ENCODE measurements at regions of chr20 and their contacts with region 1.

Region 1: GRCh38 chr20:62793912-62794724 is 2.2 kb upstream of the MRGBP start:
- DNase-seq: peak; percentile 99
- ATAC-seq: peak; percentile 83
- H3K4me3 Mint-ChIP-seq: peak overlapping the region; percentile 82
- H3K27ac Mint-ChIP-seq: peak overlapping the region; percentile 92
- H3K4me1 Mint-ChIP-seq: peaks cover 44% of the 10 kb centered on the region
- H3K27me3 Mint-ChIP-seq: no peaks in the 10 kb centered on the region
- CTCF ChIP-seq: no peak

Region 2: GRCh38 chr20:62386383-62387218 is 407.5 kb before region 1 on chr20 and contains the start of gene RPS21:
- CTCF ChIA-PET with region 1: no interaction called
- POLR2A ChIA-PET with region 1: interaction called, 16 read pairs
- intact Hi-C with region 1: loop called (anchors 1 kb)
- DNase-seq: peak; percentile 91
- ATAC-seq: peak; percentile 87
- H3K4me3 Mint-ChIP-seq: peak within 1 kb of the TSS; percentile 89
- H3K27ac Mint-ChIP-seq: peak within 1 kb of the TSS; percentile 80
- H3K4me1 Mint-ChIP-seq: peaks cover 48% of the 10 kb centered on the region
- H3K27me3 Mint-ChIP-seq: no peaks in the 10 kb centered on the region
- CTCF ChIP-seq: no peak
- total RNA-seq, gene RPS21: 2,912 and 3,555 TPM in 2 replicates

Region 3: DNA sequence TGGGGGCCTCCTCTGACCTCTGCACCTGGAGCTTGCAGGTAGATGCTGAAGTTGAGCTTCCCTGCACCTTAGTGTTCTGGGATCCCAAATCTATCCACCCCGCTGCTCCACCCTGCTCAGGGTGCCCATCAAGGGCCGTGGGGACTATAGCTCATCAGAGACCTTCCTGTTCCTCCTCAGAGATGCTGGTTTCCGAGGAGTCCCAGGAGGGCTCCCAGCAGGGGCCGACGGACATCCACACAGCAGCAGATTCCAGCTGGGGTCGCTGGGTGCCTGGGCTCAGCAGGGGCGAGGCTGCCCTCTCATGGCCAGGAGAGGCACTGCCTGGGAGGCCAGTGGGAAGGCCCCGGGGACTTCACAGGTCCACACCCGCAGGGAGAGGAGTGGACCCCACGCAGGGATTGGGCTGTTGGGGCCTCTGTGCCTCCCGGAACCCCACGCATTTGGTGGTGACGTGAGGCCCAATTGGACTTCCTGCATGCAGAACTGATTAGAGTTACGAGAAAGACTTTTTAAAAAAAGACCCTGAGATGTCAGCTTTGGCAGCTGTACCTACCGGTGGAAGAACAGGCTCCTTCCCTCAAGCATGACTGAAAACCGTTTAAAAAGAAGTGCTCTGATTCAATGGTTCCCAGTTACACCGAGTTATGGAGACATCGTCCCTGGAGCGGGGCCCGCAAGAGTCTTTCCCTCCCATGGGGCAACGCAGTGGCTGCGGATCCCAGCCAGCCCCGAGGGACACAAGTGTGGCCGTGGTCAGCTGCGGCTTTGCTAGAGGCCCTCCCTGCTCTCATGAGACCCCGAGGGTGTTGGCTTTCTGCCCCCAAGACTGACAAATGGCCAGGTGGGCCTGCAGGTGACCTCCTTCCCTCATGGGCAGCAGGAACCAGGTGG is 177.1 kb before region 1 on chr20:
- CTCF ChIA-PET with region 1: interaction called, 13 read pairs
- POLR2A ChIA-PET with region 1: interaction called, 48 read pairs
- intact Hi-C with region 1: loop called (anchors 1 kb)
- DNase-seq: peak; percentile 73
- ATAC-seq: peak; percentile 61
- H3K4me3 Mint-ChIP-seq: peak overlapping the region; percentile 73
- H3K27ac Mint-ChIP-seq: peak overlapping the region; percentile 93
- H3K4me1 Mint-ChIP-seq: peaks cover 45% of the 10 kb centered on the region
- H3K27me3 Mint-ChIP-seq: no peaks in the 10 kb centered on the region
- CTCF ChIP-seq: peak; percentile 84

Region 4: DNA sequence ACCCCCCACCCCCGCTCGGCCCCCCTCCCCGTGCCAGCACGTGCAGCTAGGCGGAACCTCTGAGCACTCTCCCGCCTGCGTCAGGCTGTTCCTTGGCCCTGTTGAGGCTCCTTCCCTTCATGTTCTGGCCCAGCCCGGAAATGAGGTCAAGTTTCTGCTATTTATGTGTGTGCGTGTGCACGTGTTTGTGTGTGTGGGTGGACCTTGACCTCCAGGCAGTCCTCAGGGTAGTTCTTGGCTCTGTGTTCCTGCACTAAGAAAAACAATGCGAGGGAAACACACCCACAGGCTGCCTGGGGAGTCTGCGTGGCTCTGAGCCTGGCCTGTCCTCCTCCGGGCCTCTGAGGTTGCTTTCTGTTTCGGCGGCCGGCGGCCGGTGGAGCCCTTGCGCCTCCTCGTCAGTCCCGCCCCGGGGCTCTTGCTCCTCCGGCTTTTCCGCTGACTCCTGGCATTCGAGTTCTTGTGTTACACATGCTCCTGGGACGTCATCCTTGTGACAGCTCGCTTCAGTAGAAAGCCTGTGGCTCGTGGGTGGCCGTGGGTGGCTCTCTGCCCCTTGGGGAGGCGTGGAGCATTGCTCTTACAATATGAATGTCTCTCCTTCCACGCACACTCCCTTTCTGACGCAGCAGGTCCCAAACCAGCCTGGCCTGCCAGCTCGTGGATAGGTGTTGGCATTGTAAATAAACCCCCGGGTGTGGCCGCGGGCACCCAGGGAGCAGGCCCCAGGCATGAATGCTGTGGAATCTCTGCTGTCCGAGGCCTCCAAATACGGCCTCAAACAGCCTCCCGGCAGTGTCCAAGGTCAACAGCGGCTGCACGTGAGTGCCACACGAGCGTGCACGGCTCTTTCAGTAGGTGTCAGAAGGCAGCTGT is 141.8 kb before region 1 on chr20:
- CTCF ChIA-PET with region 1: interaction called, 4 read pairs
- POLR2A ChIA-PET with region 1: interaction called, 17 read pairs
- intact Hi-C with region 1: loop called (anchors 1 kb)
- DNase-seq: peak; percentile 55
- ATAC-seq: peak; percentile 55
- H3K4me3 Mint-ChIP-seq: peak overlapping the region; percentile 82
- H3K27ac Mint-ChIP-seq: peak overlapping the region; percentile 94
- H3K4me1 Mint-ChIP-seq: peaks cover 63% of the 10 kb centered on the region
- H3K27me3 Mint-ChIP-seq: no peaks in the 10 kb centered on the region
- CTCF ChIP-seq: no peak

Region 5: DNA sequence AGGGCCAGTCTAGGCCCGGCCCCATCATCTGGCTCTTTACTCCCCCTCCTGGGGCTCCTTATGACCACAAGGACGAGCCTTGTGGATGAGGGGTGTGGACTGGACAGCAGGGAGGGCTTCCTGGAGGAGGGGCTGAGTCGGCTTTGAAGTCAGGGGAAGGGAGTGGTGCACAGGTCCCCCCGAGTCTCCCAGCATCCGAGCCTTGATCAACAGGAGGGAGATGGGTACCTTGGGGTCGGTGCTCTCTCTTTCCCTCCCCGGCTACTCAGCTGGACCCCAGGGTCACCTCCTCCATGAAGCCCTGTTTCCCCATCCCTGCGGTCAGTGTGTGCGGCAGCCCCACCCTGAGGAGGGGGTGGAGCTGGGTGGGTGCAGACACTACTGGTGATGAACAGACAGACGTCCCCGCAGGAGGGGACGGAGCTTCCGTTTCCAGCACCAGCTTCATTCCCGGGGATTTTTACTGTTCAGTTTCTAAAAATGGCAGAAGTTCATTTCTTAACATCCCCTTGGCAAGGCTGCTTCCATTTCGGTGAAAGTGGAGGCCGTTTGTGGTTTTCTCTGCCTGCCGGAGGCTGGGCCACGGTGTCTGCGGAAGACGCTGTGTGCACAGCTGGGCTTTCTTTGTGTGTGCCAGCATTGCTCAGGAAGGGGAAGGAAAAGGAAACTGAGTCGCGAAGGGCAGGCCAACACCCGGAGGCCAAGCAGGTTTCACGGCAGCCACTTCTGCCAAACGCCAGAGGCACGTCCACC is 65.9 kb before region 1 on chr20:
- CTCF ChIA-PET with region 1: no interaction called
- POLR2A ChIA-PET with region 1: no interaction called
- intact Hi-C with region 1: no loop called
- DNase-seq: no peak
- ATAC-seq: no peak
- H3K4me3 Mint-ChIP-seq: no peak overlapping the region
- H3K27ac Mint-ChIP-seq: no peak overlapping the region
- H3K4me1 Mint-ChIP-seq: peaks cover 6% of the 10 kb centered on the region
- H3K27me3 Mint-ChIP-seq: peaks cover 41% of the 10 kb centered on the region
- CTCF ChIP-seq: no peak

Region 6: GRCh38 chr20:62755817-62756724 is 38.0 kb before region 1 on chr20:
- CTCF ChIA-PET with region 1: no interaction called
- POLR2A ChIA-PET with region 1: no interaction called
- intact Hi-C with region 1: no loop called
- DNase-seq: no peak
- ATAC-seq: no peak
- H3K4me3 Mint-ChIP-seq: no peak overlapping the region
- H3K27ac Mint-ChIP-seq: no peak overlapping the region
- H3K4me1 Mint-ChIP-seq: no peaks in the 10 kb centered on the region
- H3K27me3 Mint-ChIP-seq: peaks cover 24% of the 10 kb centered on the region
- CTCF ChIP-seq: no peak

Region 7: DNA sequence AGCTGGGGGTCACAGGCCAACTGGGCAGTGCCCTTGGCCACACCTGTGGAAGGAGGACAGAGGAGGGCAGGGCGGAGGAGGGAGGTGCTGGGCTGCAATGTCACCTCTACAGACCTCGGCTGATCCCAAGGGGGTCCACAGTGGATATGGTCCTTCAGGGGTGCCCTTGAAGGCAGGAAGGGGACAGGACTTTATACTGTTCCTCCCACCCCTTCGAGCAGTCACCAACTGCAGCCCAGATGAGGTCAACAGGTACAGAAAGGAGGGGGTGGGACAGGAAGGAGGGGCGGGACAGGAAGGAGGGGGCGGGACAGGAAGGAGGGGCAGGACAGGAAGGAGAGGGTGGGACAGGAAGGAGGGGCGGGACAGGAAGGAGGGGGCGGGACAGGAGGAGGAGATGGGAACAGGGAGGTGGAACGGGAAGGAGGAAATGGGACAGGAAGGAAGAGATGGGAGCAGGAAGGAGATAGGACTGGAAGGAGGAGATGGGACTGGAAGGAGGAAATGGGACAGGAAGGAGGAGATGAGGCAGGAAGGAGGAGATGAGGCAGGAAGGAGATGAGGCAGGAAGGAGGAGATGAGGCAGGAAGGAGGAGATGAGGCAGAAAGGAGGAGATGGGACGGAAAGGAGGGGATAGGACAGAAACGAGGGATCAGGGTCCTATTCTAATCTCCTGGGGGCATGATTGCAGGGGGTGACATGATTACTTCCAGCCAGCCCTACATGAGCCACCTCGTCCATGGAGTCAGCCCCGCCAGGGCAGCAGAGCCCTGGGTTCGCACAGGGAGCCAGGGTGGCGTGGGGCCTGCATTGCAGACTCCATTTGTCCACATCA is 17.2 kb before region 1 on chr20:
- CTCF ChIA-PET with region 1: no interaction called
- POLR2A ChIA-PET with region 1: interaction called, 5 read pairs
- intact Hi-C with region 1: loop called (anchors 1 kb)
- DNase-seq: no peak
- ATAC-seq: peak; percentile 77
- H3K4me3 Mint-ChIP-seq: peak overlapping the region; percentile 38
- H3K27ac Mint-ChIP-seq: peak overlapping the region; percentile 76
- H3K4me1 Mint-ChIP-seq: peaks cover 25% of the 10 kb centered on the region
- H3K27me3 Mint-ChIP-seq: no peaks in the 10 kb centered on the region
- CTCF ChIP-seq: no peak

Region 8: DNA sequence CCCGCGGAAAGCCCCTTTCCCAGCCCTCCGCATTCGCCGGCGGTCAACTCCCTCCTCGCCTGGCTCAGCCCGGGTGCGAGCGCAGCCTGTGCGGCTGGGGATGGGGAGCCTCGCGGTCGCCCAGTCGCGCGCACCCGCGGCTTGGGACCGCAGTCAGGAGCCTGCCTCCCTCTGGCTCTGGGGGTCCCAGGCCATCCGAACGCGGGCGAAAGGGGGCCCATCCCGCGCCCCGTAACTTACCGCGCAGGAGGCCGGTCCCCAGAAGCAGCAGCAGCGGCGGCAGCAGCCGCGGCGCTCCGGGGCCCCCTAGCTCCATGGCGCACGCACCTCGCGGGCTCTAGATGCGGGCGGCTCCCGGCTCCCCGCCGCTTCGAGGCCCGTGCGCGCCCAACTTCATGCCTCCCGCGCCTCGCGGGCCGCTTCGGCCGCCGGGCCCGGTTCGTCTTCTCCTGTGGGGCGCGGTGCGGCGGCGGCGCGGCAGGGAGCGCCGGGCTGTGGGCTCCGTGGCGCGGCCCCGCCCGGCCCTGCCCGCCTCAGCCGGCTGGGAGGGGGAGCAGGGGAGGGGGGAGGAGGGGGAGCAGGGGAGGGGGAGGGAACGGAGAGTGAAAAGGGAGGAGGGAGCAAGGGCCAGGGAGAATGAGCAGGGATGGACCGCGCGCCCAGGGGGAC is 566.9 kb after region 1 on chr20 and contains the start of gene CHRNA4:
- CTCF ChIA-PET with region 1: no interaction called
- POLR2A ChIA-PET with region 1: no interaction called
- intact Hi-C with region 1: no loop called
- DNase-seq: no peak
- ATAC-seq: no peak
- H3K4me3 Mint-ChIP-seq: no peak within 1 kb of the TSS
- H3K27ac Mint-ChIP-seq: no peak within 1 kb of the TSS
- H3K4me1 Mint-ChIP-seq: peaks cover 4% of the 10 kb centered on the region
- H3K27me3 Mint-ChIP-seq: peaks cover 18% of the 10 kb centered on the region
- CTCF ChIP-seq: no peak
- total RNA-seq, gene CHRNA4: not detected in 2 replicates